ENCODE measurements at regions of chr18 and their contacts with region 1.

Region 1: DNA sequence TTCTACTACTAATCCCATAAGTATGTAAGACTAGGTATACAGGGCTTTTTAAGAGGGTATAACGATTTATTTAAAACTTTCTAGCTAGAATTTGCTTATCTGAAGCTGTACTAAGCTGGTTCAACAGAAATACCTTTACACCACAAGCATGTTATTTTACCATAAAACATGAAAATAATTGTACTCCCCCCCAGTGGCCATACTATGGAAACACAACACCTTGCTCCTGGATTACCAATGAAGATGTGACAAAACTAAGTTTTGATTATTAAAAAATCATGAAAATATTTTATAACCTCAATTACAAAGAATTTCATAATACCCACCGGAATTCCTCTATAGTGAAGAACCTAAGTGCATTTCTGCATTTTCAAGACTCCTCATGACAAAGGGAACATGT is 27.3 kb downstream of the LPIN2 start:
- DNase-seq: peak in 4 of 14 experiments; percentile 25 to 77 (median 75)
- ATAC-seq: peak; percentile 69
- H3K4me3 ChIP-seq: no peak overlapping the region
- H3K4me3 Mint-ChIP-seq: no peak overlapping the region
- H3K27ac ChIP-seq: no peak overlapping the region
- H3K27ac Mint-ChIP-seq: peak overlapping the region; percentile 89
- H3K4me1 ChIP-seq: peaks cover 23% of the 10 kb centered on the region
- H3K4me1 Mint-ChIP-seq: peaks cover 79% of the 10 kb centered on the region
- H3K27me3 ChIP-seq: no peaks in the 10 kb centered on the region
- H3K27me3 Mint-ChIP-seq: no peaks in the 10 kb centered on the region
- CTCF ChIP-seq: peak; percentile 74

Region 2: DNA sequence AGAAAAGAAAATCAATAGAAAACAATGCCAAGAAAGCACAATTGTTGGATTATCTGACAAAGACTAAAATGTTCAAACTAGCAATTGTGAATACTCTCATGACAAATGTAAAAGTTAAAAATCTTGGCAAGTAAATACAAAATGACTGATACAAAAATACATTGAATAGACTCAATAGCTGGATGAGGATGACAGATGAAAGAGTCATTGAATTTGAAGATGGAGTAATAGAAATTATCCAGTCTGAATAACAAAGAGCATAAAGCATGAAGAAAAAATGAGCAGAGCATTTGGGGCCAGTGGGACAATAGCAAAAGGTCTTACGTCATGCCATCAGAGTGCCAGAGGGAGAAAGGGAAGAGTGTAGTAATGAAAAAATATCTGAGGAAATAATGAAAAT is 772.8 kb before region 1 on chr18:
- CTCF ChIA-PET with region 1: no interaction called
- POLR2A ChIA-PET with region 1: no interaction called
- intact Hi-C with region 1: no loop called
- DNase-seq: no peak
- ATAC-seq: no peak
- H3K4me3 ChIP-seq: no peak overlapping the region
- H3K4me3 Mint-ChIP-seq: no peak overlapping the region
- H3K27ac ChIP-seq: no peak overlapping the region
- H3K27ac Mint-ChIP-seq: no peak overlapping the region
- H3K4me1 ChIP-seq: no peaks in the 10 kb centered on the region
- H3K4me1 Mint-ChIP-seq: no peaks in the 10 kb centered on the region
- H3K27me3 ChIP-seq: no peaks in the 10 kb centered on the region
- H3K27me3 Mint-ChIP-seq: peaks cover 31% of the 10 kb centered on the region
- CTCF ChIP-seq: no peak

Region 3: DNA sequence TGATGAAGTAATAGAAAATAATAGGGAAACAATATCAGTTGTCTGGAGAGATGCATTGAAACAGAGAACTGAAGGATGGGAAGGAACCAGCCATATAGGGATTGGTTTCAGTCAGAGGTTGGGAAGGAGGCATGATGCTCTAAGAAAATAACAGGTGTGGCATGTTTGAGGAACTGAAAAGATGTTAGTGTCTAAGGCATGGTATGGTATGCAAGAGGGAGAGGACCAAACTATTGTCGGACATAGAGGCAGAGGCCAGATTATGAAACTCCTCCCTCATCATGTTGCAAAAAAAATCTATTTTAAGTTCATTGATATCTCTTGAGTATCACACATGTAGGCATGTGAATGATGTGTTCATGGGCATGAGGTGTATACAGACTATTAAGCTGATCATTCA is 187.7 kb before region 1 on chr18:
- CTCF ChIA-PET with region 1: no interaction called
- POLR2A ChIA-PET with region 1: no interaction called
- intact Hi-C with region 1: loop called in 1 of 2 experiments (anchors 10 kb)
- DNase-seq: no peak
- ATAC-seq: no peak
- H3K4me3 ChIP-seq: no peak overlapping the region
- H3K4me3 Mint-ChIP-seq: no peak overlapping the region
- H3K27ac ChIP-seq: no peak overlapping the region
- H3K27ac Mint-ChIP-seq: no peak overlapping the region
- H3K4me1 ChIP-seq: no peaks in the 10 kb centered on the region
- H3K4me1 Mint-ChIP-seq: peaks cover 13% of the 10 kb centered on the region
- H3K27me3 ChIP-seq: no peaks in the 10 kb centered on the region
- H3K27me3 Mint-ChIP-seq: no peaks in the 10 kb centered on the region
- CTCF ChIP-seq: no peak

Region 4: GRCh38 chr18:2906704-2907549 is 78.7 kb before region 1 on chr18:
- CTCF ChIA-PET with region 1: no interaction called
- POLR2A ChIA-PET with region 1: no interaction called
- intact Hi-C with region 1: no loop called
- DNase-seq: peak in 12 of 14 experiments; percentile 22 to 73 (median 46)
- ATAC-seq: peak; percentile 74
- H3K4me3 ChIP-seq: peak overlapping the region; percentile 71
- H3K4me3 Mint-ChIP-seq: peak overlapping the region; percentile 85
- H3K27ac ChIP-seq: peak overlapping the region; percentile 63 to 66
- H3K27ac Mint-ChIP-seq: peak overlapping the region; percentile 78
- H3K4me1 ChIP-seq: peaks cover 23% of the 10 kb centered on the region
- H3K4me1 Mint-ChIP-seq: peaks cover 19% of the 10 kb centered on the region
- H3K27me3 ChIP-seq: no peaks in the 10 kb centered on the region
- H3K27me3 Mint-ChIP-seq: no peaks in the 10 kb centered on the region
- CTCF ChIP-seq: no peak

Region 5: GRCh38 chr18:2932247-2933181 is 53.1 kb before region 1 on chr18:
- CTCF ChIA-PET with region 1: interaction called, 17 read pairs
- POLR2A ChIA-PET with region 1: interaction called, 23 read pairs
- intact Hi-C with region 1: loop called (anchors 1 kb)
- DNase-seq: peak in 8 of 14 experiments; percentile 13 to 84 (median 51)
- ATAC-seq: peak; percentile 80
- H3K4me3 ChIP-seq: no peak overlapping the region
- H3K4me3 Mint-ChIP-seq: no peak overlapping the region
- H3K27ac ChIP-seq: peak overlapping the region; percentile 18 to 51
- H3K27ac Mint-ChIP-seq: peak overlapping the region; percentile 67
- H3K4me1 ChIP-seq: peaks cover 9% of the 10 kb centered on the region
- H3K4me1 Mint-ChIP-seq: peaks cover 36% of the 10 kb centered on the region
- H3K27me3 ChIP-seq: no peaks in the 10 kb centered on the region
- H3K27me3 Mint-ChIP-seq: no peaks in the 10 kb centered on the region
- CTCF ChIP-seq: peak; percentile 92

Region 6: DNA sequence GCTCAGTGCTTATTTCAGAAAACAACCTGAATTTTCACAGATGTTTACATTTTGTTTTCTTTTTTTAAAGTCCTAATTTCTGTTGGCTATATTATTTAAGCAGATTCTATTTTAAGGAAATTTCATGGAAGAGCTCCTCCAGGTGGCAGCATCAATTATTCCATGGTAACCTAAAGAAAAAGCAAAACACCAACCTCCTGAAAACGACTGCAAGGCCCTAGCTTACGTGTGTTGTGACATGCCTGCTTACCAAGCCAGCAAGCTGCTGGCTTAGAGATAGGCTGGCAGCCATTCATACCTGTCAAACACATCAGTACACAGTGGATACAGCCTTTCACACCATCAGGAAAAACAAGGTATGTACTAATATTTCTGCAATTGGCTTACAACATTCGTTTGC is 37.6 kb before region 1 on chr18:
- CTCF ChIA-PET with region 1: interaction called, 5 read pairs
- POLR2A ChIA-PET with region 1: interaction called, 21 read pairs
- intact Hi-C with region 1: no loop called
- DNase-seq: peak in 2 of 14 experiments; percentile 24 to 31
- ATAC-seq: peak; percentile 56
- H3K4me3 ChIP-seq: no peak overlapping the region
- H3K4me3 Mint-ChIP-seq: no peak overlapping the region
- H3K27ac ChIP-seq: no peak overlapping the region
- H3K27ac Mint-ChIP-seq: peak overlapping the region; percentile 51
- H3K4me1 ChIP-seq: peaks cover 13% of the 10 kb centered on the region
- H3K4me1 Mint-ChIP-seq: peaks cover 72% of the 10 kb centered on the region
- H3K27me3 ChIP-seq: no peaks in the 10 kb centered on the region
- H3K27me3 Mint-ChIP-seq: no peaks in the 10 kb centered on the region
- CTCF ChIP-seq: no peak

Region 7: DNA sequence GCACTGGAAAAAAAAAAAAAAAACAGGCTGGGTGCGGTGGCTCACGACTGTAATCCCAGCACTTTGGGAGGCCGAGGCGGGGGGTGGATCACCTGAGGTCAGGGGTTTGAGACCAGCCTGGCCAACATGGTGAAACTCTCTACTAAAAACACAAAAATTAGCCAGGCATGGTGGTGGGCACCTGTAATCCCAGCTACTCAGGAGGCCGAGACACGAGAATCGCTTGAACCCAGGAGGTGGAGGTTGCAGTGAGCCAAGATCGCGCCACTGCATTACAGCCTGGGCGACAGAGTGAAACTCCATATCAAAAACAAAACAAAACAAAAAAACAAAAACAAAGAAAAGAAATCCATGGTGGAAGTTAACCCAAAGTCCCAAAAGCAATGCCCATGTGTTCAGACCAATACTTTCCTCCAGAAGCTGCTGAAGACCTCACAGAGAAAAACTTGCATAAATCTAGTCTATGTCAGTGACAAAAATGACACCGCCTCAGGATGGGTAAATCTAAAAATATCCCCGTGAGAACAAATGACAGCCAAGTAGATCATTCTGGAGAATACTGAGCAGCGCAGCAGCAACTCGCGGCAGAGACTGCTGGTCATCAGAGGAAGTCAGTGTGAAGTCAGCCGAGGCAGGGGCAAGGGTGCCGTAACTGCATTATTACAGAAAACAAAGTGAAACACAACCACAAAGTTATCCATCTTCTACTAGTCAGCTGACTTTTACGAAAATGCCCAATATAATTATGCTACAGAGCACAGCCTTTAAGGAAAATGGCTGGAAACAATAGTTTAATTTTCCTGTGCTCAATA is 13.7 kb before region 1 on chr18:
- CTCF ChIA-PET with region 1: interaction called, 8 read pairs
- POLR2A ChIA-PET with region 1: interaction called, 66 read pairs
- intact Hi-C with region 1: loop called in 1 of 2 experiments (anchors 1 kb)
- DNase-seq: peak; percentile 42 to 91 (median 62)
- ATAC-seq: peak; percentile 73
- H3K4me3 ChIP-seq: peak overlapping the region; percentile 45
- H3K4me3 Mint-ChIP-seq: peak overlapping the region; percentile 92
- H3K27ac ChIP-seq: peak overlapping the region; percentile 81 to 89
- H3K27ac Mint-ChIP-seq: peak overlapping the region; percentile 96
- H3K4me1 ChIP-seq: peaks cover 79% of the 10 kb centered on the region
- H3K4me1 Mint-ChIP-seq: peaks cover 91% of the 10 kb centered on the region
- H3K27me3 ChIP-seq: no peaks in the 10 kb centered on the region
- H3K27me3 Mint-ChIP-seq: no peaks in the 10 kb centered on the region
- CTCF ChIP-seq: no peak

Measured in CD4-positive, alpha-beta T cell (primary cell).